Prostate gland (tissue), 2 donors: ENCODE measurements at regions of chr17 and their contacts with region 1.

Region 1: DNA sequence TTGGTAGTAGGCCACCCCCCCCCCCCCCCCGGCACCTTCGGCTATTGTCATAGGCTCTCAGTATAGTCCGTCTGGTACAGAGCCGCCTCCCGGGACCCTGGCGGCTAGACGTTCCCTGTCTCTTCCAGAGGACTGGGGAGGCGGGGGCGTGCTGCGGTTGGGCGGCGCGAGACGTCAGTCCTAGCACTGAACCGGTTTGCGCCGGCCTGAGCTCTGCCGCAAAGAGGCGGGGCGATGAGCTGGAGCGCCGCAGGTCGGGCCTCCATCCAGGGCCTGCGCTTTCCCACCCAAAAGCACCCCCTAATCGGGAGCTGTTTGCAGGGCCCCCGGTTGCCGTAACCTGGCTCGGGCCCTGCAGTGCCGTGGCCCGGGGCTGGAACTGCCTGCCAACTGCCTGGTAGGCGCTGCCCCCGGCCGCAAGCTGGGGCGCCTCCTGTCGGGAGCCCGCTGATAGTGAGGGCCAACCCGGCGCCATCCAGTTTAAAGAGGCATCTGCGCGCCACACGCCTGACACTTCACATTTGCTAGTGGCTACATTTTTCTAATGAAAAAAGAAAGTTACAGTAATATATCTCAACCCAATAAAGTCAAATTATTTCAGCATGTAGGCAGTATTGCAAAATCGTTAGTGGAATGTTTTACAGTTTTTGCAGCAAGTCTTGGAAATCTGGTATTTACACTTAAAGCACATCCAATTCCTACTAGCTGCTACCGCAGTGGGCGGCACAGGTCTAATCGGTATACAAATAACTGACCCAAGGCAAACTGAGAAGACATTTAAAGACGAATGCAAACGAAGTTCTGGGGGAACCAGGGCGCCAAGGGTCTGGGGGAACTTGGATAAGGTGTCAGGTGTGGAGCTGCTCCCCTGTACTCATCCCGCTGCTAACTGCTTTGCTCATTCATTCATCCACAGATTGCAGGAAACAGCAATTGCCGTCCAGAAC is 748 bp upstream of the USP22 start:
- DNase-seq: peak; percentile 98
- H3K4me3 ChIP-seq: peak overlapping the region; percentile 52 to 71
- H3K27ac ChIP-seq: peak overlapping the region; percentile 93 to 100
- H3K4me1 ChIP-seq: no peaks in the 10 kb centered on the region
- H3K27me3 ChIP-seq: no peaks in the 10 kb centered on the region
- CTCF ChIP-seq: peak; percentile 80 to 96 (median 94)
- POLR2A ChIP-seq: peak; percentile 74

Region 2: DNA sequence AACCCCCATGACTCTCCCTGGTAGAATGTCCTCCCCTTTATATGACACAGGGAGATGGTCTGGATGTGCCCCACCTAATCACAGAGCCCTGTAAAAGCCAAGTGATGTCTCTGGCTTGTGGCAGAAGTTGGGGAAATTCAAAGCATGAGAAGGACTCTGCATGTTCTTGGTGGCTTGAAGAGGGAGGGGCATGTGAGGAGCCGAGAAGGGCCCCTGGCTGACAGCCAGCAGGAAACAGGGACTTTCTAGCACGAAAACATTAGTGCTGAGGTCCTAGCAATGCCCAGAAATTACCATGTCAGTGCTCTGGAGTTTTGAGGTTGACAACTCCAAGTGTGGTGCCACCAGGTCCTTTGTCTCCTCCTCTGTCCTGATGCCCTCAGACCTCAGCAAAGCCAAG is 76.7 kb before region 1 on chr17:
- intact Hi-C with region 1: no loop called
- DNase-seq: no peak
- H3K4me3 ChIP-seq: no peak overlapping the region
- H3K27ac ChIP-seq: no peak overlapping the region
- H3K4me1 ChIP-seq: no peaks in the 10 kb centered on the region
- H3K27me3 ChIP-seq: no peaks in the 10 kb centered on the region
- CTCF ChIP-seq: no peak
- POLR2A ChIP-seq: no peak

Region 3: GRCh38 chr17:21001813-21002221 is 41.7 kb before region 1 on chr17:
- intact Hi-C with region 1: loop called (anchors 5 kb)
- DNase-seq: peak; percentile 62
- H3K4me3 ChIP-seq: no peak overlapping the region
- H3K27ac ChIP-seq: peak overlapping the region; percentile 42 to 74
- H3K4me1 ChIP-seq: peaks cover 19% of the 10 kb centered on the region
- H3K27me3 ChIP-seq: no peaks in the 10 kb centered on the region
- CTCF ChIP-seq: no peak
- POLR2A ChIP-seq: no peak